Ascending aorta (tissue), 2 donors: ENCODE measurements at regions of chr15 and their contacts with region 1.

Region 1: DNA sequence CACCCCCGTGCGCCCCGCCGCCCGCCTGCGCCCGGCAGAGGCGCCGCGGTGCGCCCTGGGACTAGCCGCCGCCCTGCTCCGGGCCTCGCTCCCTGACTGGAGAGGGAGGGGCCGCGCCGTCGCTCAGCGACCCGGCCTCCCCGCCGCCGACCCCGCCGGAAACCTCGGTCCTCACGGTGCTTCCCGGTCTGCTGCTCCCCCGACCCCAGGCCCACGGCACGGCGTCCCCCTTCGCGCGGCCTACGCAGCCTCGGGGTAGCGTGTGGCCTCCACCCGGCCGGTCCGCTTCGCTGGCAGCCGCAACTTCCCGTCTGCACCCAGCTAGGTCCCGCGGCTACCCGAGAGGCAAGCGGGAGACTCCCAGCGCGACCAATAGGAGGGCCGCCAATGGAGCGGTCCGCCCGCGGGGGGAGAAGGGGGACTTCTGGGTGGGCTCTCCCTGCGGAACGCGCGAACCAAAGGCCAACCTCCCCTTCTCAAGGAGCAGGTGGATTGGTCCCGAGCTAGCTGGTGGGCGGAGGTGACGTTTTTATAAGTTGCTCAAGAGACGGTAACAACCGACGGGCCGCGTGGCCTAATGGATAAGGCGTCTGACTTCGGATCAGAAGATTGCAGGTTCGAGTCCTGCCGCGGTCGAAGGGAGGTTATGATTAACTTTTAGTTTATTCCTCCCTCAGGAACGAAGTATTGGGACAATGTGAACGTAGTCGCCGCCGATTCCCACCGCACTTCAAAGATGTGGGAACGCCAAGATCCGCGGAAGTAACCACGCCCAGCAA is at the start of gene POLG:
- DNase-seq: peak; percentile 96 to 99
- H3K4me3 ChIP-seq: peak within 1 kb of the TSS; percentile 76 to 96
- H3K27ac ChIP-seq: peak within 1 kb of the TSS; percentile 88 to 93
- H3K4me1 ChIP-seq: peaks cover 14 to 38% of the 10 kb centered on the region in 2 donors
- H3K27me3 ChIP-seq: no peaks in the 10 kb centered on the region
- CTCF ChIP-seq: no peak
- total RNA-seq, gene POLG: 69.1 TPM

Region 2: GRCh38 chr15:88546248-88547129 is 788.2 kb before region 1 on chr15 and contains the start of gene DET1:
- intact Hi-C with region 1: loop called (anchors 10 kb)
- DNase-seq: peak; percentile 86 to 97
- H3K4me3 ChIP-seq: peak within 1 kb of the TSS; percentile 82 to 91
- H3K27ac ChIP-seq: peak within 1 kb of the TSS; percentile 60 to 84
- H3K4me1 ChIP-seq: peaks cover 0 to 5% of the 10 kb centered on the region in 2 donors
- H3K27me3 ChIP-seq: no peaks in the 10 kb centered on the region
- CTCF ChIP-seq: peak; percentile 61 to 84 (median 79)
- total RNA-seq, gene DET1: 1.6 TPM

Region 3: GRCh38 chr15:89378296-89379151 is 43.8 kb after region 1 on chr15:
- intact Hi-C with region 1: no loop called
- DNase-seq: no peak
- H3K4me3 ChIP-seq: peak overlapping the region; percentile 53 to 60
- H3K27ac ChIP-seq: no peak overlapping the region
- H3K4me1 ChIP-seq: peaks cover 0 to 10% of the 10 kb centered on the region in 2 donors
- H3K27me3 ChIP-seq: peaks cover 11% of the 10 kb centered on the region
- CTCF ChIP-seq: no peak

Region 4: DNA sequence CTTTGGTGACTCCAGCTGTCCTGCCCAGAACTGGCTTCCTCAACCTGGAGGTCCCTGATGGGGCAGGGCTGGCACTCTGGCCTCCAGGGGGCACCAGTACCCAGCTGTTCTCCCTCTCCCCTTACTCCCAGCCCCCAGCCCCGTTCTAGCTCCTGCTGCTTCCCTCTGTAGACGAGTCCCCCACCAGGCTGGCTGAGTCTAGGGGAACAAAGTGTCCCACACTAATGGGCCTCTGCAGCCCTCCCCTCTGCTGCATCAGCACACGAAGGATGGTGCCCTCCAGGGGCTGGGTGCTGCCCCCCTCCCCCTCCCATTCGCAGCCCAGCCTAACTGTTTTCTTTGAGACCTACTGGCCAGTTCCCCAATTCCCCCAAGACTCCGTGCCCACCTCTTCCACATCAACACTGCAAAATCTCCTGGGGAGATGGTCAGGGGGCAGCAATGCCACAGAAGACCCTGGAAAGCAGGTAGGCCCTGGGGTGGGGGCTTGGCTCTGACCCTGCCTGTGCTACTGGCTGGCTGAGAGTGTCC is 157.5 kb after region 1 on chr15:
- intact Hi-C with region 1: no loop called
- DNase-seq: peak in 1 of 2 donors; percentile 39
- H3K4me3 ChIP-seq: no peak overlapping the region
- H3K27ac ChIP-seq: no peak overlapping the region
- H3K4me1 ChIP-seq: peaks cover 0 to 6% of the 10 kb centered on the region in 2 donors
- H3K27me3 ChIP-seq: no peaks in the 10 kb centered on the region
- CTCF ChIP-seq: no peak